Right ventricle myocardium inferior (tissue), 1 donor: ENCODE measurements at regions of chr11 and their contacts with region 1.

Region 1: DNA sequence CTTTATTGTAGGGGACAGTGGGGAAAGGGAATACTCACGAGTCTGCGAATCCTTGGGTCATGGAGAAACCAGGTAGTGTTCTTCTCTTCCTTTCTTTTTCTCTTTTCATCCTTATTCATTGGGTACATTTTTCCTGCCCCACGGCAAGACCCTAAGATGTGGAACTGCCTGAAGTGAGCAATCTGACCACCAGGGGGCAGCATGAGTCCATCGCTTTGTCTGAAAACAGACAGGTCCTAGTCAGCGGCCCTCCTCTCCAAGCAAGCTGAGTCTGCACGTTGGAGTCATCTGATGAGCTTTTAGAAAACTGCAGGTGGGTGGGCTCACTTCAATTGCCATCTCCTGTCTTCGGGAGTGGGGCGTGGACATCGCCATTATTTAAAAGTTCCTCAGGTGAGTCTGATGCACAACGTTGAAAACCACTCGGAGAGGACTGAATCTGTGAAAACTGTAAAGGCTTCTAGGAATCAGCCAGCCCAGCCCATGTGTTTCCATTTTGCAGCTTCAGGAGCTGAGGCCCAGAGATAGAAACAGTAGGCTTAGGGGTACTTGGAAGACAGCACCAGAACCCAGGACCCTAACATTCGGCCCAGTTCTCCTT is 34.0 kb upstream of the FBXO3 start:
- DNase-seq: peak; percentile 81
- ATAC-seq: peak; percentile 81

Region 2: GRCh38 chr11:33829433-33830141 is 21.3 kb after region 1 on chr11:
- intact Hi-C with region 1: loop called (anchors 1 kb)
- DNase-seq: no peak
- ATAC-seq: peak; percentile 79